Ascending aorta (tissue), 2 donors: ENCODE measurements at regions of chr15 and their contacts with region 1.

Region 1: DNA sequence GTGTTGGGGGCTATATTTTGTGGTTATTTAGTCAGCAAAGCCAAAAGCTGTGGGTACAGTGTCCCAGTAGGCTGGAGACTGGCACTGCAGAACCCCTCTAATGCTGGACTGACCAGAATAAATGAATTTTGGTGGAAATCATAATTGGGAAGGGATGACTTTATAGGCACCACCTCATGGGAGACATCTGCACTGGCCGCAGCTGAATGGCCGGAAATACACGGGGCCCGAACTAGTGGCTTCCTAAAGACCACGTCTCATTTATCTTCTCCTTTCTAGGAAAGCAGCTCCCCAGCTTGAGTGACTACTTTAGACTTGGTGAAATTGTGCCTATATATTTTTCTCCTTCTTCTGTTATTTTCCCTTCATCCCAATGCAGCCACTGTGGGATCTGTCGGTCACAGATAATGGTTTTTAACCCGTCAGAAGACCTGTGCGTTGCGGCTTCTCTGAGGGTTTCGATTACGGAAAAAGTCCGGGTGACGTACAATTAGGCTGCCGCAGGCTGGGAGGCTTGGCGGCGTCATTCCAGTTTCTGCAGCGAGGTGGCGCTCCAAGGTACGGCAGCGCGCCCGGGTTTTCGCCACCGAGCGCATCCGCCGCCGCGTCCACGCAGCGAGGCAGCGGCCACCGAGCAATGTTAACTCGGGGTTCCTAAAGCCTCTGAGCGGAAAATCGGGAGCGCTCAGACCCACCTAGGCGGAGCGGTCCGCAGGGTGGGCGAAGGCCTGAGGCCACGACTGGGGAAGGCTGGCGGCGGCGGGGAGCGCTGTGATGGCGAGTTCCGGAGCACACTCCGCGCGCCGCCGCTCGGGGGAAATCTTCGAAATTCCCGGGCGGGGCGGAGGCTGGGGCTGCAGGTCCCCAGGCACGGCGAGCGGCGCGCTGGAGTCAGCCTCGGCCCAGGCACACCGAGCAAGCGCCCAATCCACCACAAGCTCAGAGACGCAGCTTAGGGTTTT is 26.3 kb downstream of the NR2F2 start:
- DNase-seq: peak in 1 of 2 donors; percentile 88
- H3K4me3 ChIP-seq: peak overlapping the region; percentile 58 to 78
- H3K27ac ChIP-seq: peak overlapping the region; percentile 35 to 55
- H3K4me1 ChIP-seq: peaks cover 4 to 15% of the 10 kb centered on the region in 2 donors
- H3K27me3 ChIP-seq: peaks cover 8% of the 10 kb centered on the region
- CTCF ChIP-seq: peak; percentile 94 to 99 (median 99)

Region 2: GRCh38 chr15:95557226-95558046 is 799.3 kb before region 1 on chr15:
- intact Hi-C with region 1: loop called (anchors 5 kb)
- DNase-seq: no peak
- H3K4me3 ChIP-seq: no peak overlapping the region
- H3K27ac ChIP-seq: peak overlapping the region; percentile 81 to 86
- H3K4me1 ChIP-seq: peaks cover 3 to 18% of the 10 kb centered on the region in 2 donors
- H3K27me3 ChIP-seq: no peaks in the 10 kb centered on the region
- CTCF ChIP-seq: no peak

Region 3: GRCh38 chr15:96247621-96248305 is 109.0 kb before region 1 on chr15:
- intact Hi-C with region 1: no loop called
- DNase-seq: no peak
- H3K4me3 ChIP-seq: no peak overlapping the region
- H3K27ac ChIP-seq: no peak overlapping the region
- H3K4me1 ChIP-seq: no peaks in the 10 kb centered on the region
- H3K27me3 ChIP-seq: no peaks in the 10 kb centered on the region
- CTCF ChIP-seq: no peak

Region 4: GRCh38 chr15:96374499-96374898 is 17.7 kb after region 1 on chr15:
- intact Hi-C with region 1: no loop called
- DNase-seq: no peak
- H3K4me3 ChIP-seq: no peak overlapping the region
- H3K27ac ChIP-seq: no peak overlapping the region
- H3K4me1 ChIP-seq: no peaks in the 10 kb centered on the region
- H3K27me3 ChIP-seq: no peaks in the 10 kb centered on the region
- CTCF ChIP-seq: no peak

Region 5: DNA sequence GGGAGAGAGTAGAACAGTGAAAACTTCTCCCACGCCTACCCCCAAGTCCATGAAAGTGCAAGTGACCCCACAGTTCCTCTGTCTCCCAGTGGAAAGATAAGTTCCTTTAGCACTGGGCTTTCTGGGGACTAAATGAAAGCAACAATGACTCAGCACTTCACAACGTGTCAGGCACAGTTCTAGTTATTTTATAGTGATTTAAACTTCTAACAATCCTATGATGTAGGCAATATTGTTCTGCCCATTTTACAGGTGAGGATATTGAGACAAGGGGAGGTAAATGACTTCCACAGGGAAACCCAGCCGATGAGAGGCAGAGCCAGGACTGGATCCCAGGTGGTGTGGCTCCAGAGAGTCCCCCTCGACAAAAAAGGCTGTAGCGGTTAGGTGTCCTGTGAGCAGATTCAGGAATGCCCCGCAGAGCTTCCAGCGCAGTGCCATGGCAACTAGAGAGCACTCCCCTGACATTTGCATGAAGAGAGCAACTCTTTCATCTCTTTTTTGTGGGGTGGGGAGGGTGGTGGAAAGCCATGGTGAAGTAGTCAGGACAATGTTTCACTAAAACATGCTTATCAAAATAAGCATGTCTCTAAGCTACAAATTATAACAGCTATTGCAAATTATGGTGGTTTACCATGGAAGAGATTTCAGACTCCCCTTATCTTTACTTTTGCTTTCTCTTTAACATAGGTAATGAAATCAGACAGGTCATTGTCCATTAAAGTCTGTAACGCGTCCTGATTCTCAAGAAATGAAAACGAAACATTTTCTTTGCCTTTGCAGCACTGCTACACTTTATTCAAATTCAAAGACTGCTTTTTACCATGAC is 35.8 kb after region 1 on chr15:
- intact Hi-C with region 1: no loop called
- DNase-seq: no peak
- H3K4me3 ChIP-seq: no peak overlapping the region
- H3K27ac ChIP-seq: no peak overlapping the region
- H3K4me1 ChIP-seq: no peaks in the 10 kb centered on the region
- H3K27me3 ChIP-seq: no peaks in the 10 kb centered on the region
- CTCF ChIP-seq: no peak

Region 6: DNA sequence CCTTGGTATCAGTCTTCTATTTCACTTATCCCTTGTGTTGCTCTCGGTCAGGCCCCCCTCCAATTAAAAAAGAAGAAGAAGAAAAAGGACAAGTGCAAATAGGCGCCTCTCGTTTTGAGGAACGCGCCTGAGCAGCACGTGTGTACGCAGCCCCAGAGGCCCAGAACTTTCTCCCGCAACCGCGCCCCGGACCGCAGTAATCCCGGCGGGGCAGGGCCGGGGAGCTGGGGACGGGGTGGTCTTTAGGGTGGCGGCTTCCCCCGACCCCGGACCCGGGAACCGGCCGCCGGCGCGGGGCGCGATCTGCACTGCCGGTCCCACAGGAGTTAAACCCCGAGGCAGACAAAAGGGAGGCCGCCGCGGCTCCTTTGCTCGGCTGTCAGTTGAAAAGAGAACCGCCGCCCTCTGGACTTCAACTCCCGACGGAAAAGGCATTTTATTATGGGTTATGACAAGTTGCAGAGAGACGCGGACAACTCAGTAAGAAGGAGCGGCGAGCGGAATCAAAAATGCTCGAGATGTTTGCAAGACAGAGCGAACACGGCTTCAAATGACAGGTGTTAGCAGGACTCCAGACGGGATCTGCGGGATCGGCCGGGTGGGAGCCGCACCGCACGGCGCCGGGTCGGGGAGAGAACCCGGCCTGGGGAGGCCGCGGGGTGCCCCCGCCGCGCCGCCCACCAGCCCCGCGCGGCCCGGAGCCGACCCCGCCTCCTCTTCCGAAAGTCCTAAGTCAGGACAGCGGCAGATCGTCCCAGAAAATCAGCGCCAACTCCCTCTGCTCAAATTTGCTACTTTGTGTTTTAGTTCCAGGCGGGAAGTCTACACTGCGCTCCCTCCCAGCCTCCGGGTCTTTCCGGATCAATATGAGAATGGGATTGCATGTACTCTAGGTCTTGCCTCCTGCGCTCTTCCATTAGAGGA is 52.7 kb after region 1 on chr15:
- intact Hi-C with region 1: loop called (anchors 5 kb)
- DNase-seq: no peak
- H3K4me3 ChIP-seq: peak overlapping the region; percentile 49 to 51
- H3K27ac ChIP-seq: no peak overlapping the region
- H3K4me1 ChIP-seq: peaks cover 8 to 13% of the 10 kb centered on the region in 2 donors
- H3K27me3 ChIP-seq: peaks cover 29% of the 10 kb centered on the region
- CTCF ChIP-seq: no peak

Region 7: DNA sequence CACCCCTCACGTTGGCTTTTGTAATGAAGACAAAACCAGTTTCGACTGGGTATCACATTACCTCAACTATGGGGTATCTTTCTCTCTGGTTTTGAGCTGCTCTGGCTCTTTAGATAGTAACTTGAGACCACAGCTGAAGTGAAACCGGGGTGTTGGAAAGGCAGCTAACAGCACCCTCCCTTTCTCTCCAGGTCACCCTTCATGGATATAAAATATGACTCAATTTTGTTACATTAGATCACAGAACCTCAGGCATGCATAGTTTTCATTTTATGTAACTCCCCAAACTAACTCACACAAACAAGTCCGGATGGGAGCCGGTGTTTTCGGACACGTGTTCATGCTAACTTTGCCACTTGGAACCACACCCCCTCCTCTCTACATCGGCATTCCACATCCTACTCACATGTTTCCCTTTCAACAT is 64.4 kb after region 1 on chr15:
- intact Hi-C with region 1: loop called (anchors 2 kb)
- DNase-seq: no peak
- H3K4me3 ChIP-seq: no peak overlapping the region
- H3K27ac ChIP-seq: no peak overlapping the region
- H3K4me1 ChIP-seq: peaks cover 4 to 8% of the 10 kb centered on the region in 2 donors
- H3K27me3 ChIP-seq: peaks cover 10% of the 10 kb centered on the region
- CTCF ChIP-seq: no peak

Region 8: GRCh38 chr15:96585484-96586386 is 229.0 kb after region 1 on chr15:
- intact Hi-C with region 1: loop called (anchors 10 kb)
- DNase-seq: no peak
- H3K4me3 ChIP-seq: no peak overlapping the region
- H3K27ac ChIP-seq: no peak overlapping the region
- H3K4me1 ChIP-seq: no peaks in the 10 kb centered on the region
- H3K27me3 ChIP-seq: no peaks in the 10 kb centered on the region
- CTCF ChIP-seq: peak in 1 of 3 experiments; percentile 22